Right cardiac atrium (tissue), 5 donors: ENCODE measurements at regions of chr5 and their contacts with region 1.

Region 1: GRCh38 chr5:132294728-132295504 is 722 bp downstream of the SLC22A4 start:
- DNase-seq: peak; percentile 78 to 85 (median 81)
- ATAC-seq: peak; percentile 7 to 62
- H3K4me3 ChIP-seq: peak overlapping the region; percentile 43
- H3K27ac ChIP-seq: peak overlapping the region; percentile 92
- H3K4me1 ChIP-seq: peaks cover 6% of the 10 kb centered on the region
- H3K27me3 ChIP-seq: no peaks in the 10 kb centered on the region

Region 2: DNA sequence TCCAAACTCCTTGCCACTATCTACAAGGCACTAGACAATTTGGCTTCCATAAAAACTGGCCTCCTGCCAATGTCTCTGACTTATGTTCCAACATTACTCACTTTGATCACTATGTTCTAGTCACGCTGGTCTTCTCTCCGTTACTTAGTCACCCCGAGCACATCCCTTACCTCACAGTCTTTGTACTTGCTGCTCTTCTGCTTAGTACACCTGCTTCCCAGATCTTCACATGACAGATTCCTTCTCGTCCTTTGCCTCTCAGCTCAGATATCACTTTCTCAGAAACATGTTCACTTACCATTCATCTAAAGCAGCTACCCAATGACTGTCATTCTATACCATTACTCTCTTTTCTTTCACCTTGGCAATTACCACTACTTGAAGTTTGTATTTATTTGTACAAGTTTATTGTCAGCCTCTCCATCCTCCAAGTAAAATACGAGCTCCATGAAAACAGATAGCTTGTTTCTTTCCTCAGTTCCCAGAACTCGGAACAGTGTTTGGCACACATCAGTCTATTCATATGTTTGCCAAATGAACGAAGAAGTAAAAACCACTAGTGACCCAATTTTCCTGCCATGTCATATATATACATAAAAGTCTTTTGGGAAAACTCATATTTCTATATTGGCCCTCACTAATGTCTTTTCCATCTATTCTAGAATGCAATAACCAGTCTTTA is 68.7 kb after region 1 on chr5:
- intact Hi-C with region 1: loop called in 1 of 4 experiments (anchors 5 kb)
- DNase-seq: peak in 1 of 3 donors; percentile 46
- ATAC-seq: peak; percentile 86 to 91
- H3K4me3 ChIP-seq: no peak overlapping the region
- H3K27ac ChIP-seq: peak overlapping the region; percentile 75
- H3K4me1 ChIP-seq: peaks cover 9% of the 10 kb centered on the region
- H3K27me3 ChIP-seq: no peaks in the 10 kb centered on the region